K562 (cell line): ENCODE measurements at regions of chr7 and their contacts with region 1.

Region 1: DNA sequence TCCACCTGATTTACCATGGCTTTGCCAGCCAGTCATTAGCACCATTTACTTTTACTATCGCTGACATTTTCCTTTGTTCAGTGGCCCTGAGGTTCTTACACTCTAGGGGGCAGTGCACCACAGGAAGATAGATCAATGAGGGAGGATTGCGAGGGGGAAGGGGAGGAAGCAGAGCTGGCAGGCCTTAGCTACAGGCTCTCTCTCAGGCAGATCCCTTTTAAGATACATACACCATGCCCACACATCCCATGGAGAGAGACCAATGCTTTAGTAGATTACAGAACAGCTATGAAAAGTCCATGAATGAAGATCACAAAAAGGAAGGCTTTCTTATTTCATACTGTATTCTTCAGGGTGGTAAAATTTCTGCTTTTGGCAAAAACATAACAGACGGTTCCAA is 47.4 kb downstream of the DENND11 start:
- DNase-seq: peak; percentile 59 to 78 (median 68)
- ATAC-seq: peak; percentile 96
- H3K4me3 ChIP-seq: no peak overlapping the region
- H3K27ac ChIP-seq: no peak overlapping the region
- H3K4me1 ChIP-seq: peaks cover 0 to 2% of the 10 kb centered on the region in 2 experiments; a peak in 1 of 5 replicates
- H3K27me3 ChIP-seq: no peaks in the 10 kb centered on the region
- CTCF ChIP-seq: peak; percentile 80 to 92 (median 88)
- EP300 ChIP-seq: no peak
- POLR2A ChIP-seq: no peak
- RAD21 ChIP-seq: peak; percentile 55 to 78

Region 2: DNA sequence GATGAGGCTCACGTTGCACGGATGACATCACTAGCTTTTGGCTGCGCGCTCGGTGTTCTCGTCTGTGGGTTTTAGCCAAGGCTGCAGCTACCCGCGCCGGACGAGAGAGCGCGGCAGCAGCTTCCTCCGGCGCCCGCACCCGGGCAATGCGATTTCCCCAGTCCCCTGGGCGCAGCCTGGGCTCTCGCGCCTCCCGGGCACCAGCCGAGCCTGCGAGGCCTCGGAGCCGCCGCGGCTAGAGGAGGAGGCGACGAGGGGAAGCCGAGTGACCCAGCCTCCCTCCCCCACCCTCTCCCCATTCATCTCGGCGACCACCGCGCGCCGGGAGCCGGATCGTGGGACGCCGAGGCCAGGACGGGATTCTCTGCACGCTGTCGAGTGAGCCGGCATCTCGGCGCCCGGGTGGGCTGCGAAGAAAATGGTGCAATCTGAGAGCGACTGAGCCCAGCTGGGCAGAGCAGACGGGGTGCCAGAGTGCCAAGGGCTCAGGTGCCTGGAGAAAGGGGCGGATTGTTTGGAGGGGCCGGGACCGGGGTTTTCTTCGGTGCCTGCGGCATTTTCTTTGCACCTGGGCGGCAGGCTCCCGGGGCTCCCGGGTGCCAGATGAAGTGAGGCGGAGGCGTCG is 581.9 kb before region 1 on chr7:
- CTCF ChIA-PET with region 1: no interaction called
- POLR2A ChIA-PET with region 1: no interaction called
- in situ Hi-C with region 1: no loop called
- intact Hi-C with region 1: loop called (anchors 10 kb)
- DNase-seq: no peak
- ATAC-seq: 0 out of 3 replicates have a peak, but pooled peaks have one; percentile 16
- H3K4me3 ChIP-seq: no peak overlapping the region
- H3K27ac ChIP-seq: no peak overlapping the region
- H3K4me1 ChIP-seq: peaks cover 0 to 31% of the 10 kb centered on the region in 2 experiments; a peak in 2 of 5 replicates
- H3K27me3 ChIP-seq: peaks cover 50 to 56% of the 10 kb centered on the region in 2 experiments
- CTCF ChIP-seq: no peak
- EP300 ChIP-seq: no peak
- POLR2A ChIP-seq: no peak
- RAD21 ChIP-seq: no peak

Region 3: DNA sequence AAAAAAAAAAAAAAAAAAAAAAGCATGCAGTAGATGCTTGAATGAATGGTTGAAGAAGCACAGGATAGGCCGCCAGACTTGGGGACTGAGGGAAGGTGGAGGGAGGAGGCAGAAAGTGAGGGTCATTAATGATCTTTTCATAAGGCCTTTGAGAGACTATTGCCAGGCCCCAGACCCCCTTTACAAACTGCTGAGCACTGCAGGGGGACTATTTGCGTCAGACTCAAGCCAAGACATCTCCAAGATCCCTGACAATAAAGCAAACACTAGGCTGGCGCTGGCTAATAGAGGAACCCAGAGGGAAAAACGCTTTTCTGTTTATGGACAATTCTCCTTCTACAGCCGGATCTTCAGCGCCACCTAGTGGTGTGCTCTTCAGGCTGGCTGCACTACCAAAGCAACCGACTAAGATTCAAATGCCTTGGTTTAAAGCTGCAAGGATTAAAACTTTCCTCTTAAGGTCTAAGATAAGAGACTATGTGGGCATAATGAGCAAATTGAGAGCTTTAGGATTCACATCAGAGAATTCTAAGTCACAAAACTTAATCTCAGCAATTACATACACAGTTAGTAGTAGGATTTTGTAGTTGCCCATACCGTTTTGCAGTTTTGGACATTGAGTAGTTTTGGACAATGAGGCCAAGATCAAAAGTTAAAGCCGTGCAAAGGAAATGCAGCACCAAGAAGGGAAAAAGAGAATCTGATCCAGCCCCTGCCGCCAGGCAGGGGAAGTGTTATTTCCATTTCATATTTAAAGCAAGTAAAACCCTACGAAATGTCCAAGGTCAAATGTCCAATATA is 121.2 kb before region 1 on chr7:
- CTCF ChIA-PET with region 1: interaction called, 3 read pairs
- POLR2A ChIA-PET with region 1: interaction called, 3 read pairs
- in situ Hi-C with region 1: no loop called
- intact Hi-C with region 1: loop called (anchors 1 kb)
- DNase-seq: peak; percentile 79 to 83 (median 81)
- ATAC-seq: peak; percentile 96
- H3K4me3 ChIP-seq: no peak overlapping the region
- H3K27ac ChIP-seq: no peak overlapping the region
- H3K4me1 ChIP-seq: no peaks in the 10 kb centered on the region
- H3K27me3 ChIP-seq: peaks cover 10% of the 10 kb centered on the region in 2 experiments
- CTCF ChIP-seq: peak; percentile 90 to 97 (median 97)
- EP300 ChIP-seq: no peak
- POLR2A ChIP-seq: no peak
- RAD21 ChIP-seq: peak; percentile 82 to 91

Region 4: GRCh38 chr7:141674702-141675101 is 20.2 kb after region 1 on chr7:
- CTCF ChIA-PET with region 1: interaction called, 4 read pairs
- POLR2A ChIA-PET with region 1: interaction called, 3 read pairs
- in situ Hi-C with region 1: no loop called
- intact Hi-C with region 1: loop called (anchors 2 kb)
- DNase-seq: peak; percentile 50 to 71 (median 52)
- ATAC-seq: peak; percentile 96
- H3K4me3 ChIP-seq: no peak overlapping the region
- H3K27ac ChIP-seq: no peak overlapping the region
- H3K4me1 ChIP-seq: peaks cover 0 to 3% of the 10 kb centered on the region in 2 experiments; a peak in 2 of 5 replicates
- H3K27me3 ChIP-seq: peaks cover 11 to 28% of the 10 kb centered on the region in 2 experiments
- CTCF ChIP-seq: peak; percentile 73 to 78 (median 77)
- EP300 ChIP-seq: no peak
- POLR2A ChIP-seq: no peak
- RAD21 ChIP-seq: peak in 1 of 2 experiments; percentile 56; a peak in 2 of 4 replicates

Region 5: DNA sequence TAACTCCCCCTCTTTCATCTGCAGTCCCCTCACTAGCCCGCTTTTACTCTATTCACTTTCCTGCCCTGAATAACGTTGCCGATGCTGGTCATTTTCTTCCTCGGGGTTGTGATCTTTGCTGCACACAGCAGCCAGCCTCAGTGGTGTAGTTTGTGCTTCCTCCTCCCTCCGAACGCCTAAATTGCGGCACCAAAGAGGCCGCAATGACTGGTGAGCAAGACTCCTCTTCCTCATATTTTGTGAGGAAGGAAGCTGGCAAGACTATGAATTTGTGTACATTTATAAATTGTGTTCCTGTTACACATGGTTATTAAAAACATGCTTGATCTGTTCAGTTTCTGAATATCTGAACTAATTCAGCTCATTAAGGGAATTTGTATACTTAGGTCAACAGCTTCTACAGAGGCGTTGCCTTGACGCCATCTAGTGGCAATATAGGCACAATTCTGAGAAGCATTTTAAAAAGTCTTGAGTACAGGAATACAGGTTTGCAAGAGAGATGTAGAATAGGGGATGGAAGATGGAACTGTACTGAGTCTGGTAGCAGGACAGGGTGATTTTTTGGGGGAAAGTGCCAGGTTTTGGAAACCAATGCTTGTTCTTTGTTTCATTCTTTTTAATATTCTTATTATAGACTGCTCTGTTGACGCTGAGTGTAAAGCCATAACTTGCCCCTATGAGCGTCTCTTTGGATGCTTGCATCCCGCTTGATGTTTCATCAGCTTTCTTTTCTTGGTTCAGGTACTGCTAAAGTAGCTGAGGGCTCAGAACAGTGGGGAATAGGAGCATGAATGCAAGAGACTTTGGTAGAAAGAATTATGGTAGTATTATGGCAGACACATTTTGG is 131.4 kb after region 1 on chr7:
- CTCF ChIA-PET with region 1: interaction called, 3 read pairs
- POLR2A ChIA-PET with region 1: no interaction called
- in situ Hi-C with region 1: no loop called
- intact Hi-C with region 1: loop called (anchors 1 kb)
- DNase-seq: peak; percentile 41 to 74 (median 54)
- ATAC-seq: peak; percentile 95
- H3K4me3 ChIP-seq: no peak overlapping the region
- H3K27ac ChIP-seq: no peak overlapping the region
- H3K4me1 ChIP-seq: no peaks in the 10 kb centered on the region
- H3K27me3 ChIP-seq: no peaks in the 10 kb centered on the region
- CTCF ChIP-seq: peak; percentile 69 to 89 (median 84)
- EP300 ChIP-seq: no peak
- POLR2A ChIP-seq: no peak
- RAD21 ChIP-seq: peak in 1 of 2 experiments; percentile 73; a peak in 3 of 4 replicates